Posterior vena cava (tissue), 2 donors: ENCODE measurements at regions of chr11 and their contacts with region 1.

Region 1: GRCh38 chr11:47176328-47177228 is at the start of gene ARFGAP2:
- DNase-seq: peak; percentile 99
- total RNA-seq, gene ARFGAP2: 49.4 to 58.5 TPM

Region 2: DNA sequence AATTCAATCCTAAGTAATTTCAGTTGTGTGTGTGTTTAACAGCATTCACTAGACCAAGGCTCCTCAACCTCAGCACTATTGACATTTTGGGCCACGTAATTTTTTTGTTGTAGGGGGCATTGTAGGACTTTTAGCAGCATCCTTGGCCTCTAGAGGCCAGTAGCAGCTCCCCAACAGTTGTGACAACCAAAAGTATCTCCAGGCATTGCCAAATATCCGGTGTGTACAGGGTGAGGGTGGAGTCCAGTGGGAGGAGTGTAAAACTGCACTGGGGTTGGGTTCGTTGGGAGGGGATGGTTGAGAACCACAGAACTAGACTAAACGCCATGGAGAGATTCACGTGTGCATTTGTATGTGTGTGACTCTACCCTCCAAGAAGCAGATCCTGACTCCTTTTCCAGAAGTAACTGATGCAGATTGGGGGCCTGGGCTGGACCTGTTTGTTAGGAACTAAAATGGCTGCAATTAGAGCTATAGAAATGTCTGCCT is 1049.4 kb before region 1 on chr11:
- intact Hi-C with region 1: no loop called
- DNase-seq: no peak

Region 3: GRCh38 chr11:47216121-47216798 is 39.7 kb after region 1 on chr11:
- intact Hi-C with region 1: loop called in 1 of 2 experiments (anchors 5 kb)
- DNase-seq: no peak